K562 (cell line): ENCODE measurements at regions of chr1 and their contacts with region 1.

Region 1: DNA sequence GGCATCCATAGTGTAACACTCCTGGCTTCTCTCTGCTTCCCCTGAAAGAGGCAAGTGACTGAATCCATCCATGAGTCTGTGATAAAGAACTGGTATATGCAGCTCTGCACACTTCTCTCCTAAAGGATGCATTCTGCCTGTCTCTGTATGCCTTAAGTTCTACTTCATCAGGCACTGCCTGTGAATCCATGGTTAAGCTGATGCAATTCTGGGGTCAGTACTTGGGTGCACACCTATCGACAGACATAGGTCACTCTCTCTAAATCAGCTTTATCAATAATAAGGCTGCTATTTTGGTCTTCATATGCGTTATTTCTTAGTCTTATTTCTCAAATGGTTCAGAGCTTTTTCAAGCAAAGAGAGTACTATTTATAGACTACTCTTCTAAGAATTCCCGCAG is 32.7 kb upstream of the PTP4A2 start:
- DNase-seq: no peak
- ATAC-seq: peak; percentile 77
- H3K4me3 ChIP-seq: no peak overlapping the region
- H3K27ac ChIP-seq: no peak overlapping the region
- H3K4me1 ChIP-seq: peaks cover 0 to 3% of the 10 kb centered on the region in 2 experiments; a peak in 3 of 5 replicates
- H3K27me3 ChIP-seq: no peaks in the 10 kb centered on the region
- CTCF ChIP-seq: no peak
- EP300 ChIP-seq: no peak
- POLR2A ChIP-seq: no peak
- RAD21 ChIP-seq: no peak

Region 2: DNA sequence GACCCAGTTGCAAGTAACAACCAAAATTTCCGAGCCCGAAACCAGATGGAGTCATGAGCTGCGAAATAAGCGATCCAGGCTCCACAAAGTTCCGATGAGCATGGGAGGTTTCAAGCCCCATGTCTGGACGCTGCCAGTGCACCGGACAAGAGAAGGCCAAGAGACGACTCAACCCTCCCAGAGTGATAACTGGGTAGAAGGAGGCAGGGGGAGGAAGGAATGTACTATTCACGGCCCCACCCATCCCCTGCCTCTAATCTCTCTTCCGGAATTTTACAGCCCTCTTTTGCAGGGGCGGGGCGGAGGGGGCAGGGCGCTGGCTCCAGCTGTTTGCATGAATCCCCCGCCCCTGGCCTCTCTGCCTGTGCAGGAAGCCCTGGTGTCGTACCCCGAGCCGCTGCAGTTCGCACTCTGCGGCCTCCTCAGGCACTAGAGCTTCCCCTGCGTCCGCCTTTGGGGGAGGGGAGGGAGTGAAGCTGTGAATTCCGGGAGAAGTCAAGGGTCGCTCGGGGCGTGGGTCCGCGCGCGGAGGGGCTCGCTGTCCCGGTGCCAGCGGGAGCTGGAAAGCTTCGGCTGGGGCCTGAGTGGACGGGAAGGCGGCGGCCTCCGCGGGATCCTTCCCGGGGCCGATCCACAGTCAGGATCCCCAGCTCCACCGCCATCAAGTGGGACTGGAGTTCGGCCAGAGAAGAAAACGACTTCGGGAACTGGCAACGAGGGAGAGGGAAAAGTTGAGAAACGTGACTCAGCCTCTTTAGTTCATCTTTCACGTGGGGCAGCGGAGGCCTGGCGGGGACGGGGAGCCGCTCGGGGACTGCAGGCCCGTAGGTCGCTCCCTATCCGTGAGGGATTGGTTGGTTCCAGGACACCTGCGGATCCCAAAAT is 26.4 kb before region 1 on chr1:
- CTCF ChIA-PET with region 1: no interaction called
- POLR2A ChIA-PET with region 1: interaction called, 10 read pairs
- in situ Hi-C with region 1: no loop called
- intact Hi-C with region 1: no loop called
- DNase-seq: peak; percentile 94 to 100 (median 96)
- ATAC-seq: peak; percentile 91
- H3K4me3 ChIP-seq: peak overlapping the region; percentile 53
- H3K27ac ChIP-seq: peak overlapping the region; percentile 99
- H3K4me1 ChIP-seq: peaks cover 41 to 43% of the 10 kb centered on the region in 2 experiments
- H3K27me3 ChIP-seq: no peaks in the 10 kb centered on the region
- CTCF ChIP-seq: no peak
- EP300 ChIP-seq: peak; percentile 85
- POLR2A ChIP-seq: peak; percentile 96
- RAD21 ChIP-seq: peak; percentile 28 to 46; a peak in 3 of 4 replicates

Region 3: GRCh38 chr1:32485554-32486255 is 514.8 kb after region 1 on chr1:
- CTCF ChIA-PET with region 1: no interaction called
- POLR2A ChIA-PET with region 1: no interaction called
- in situ Hi-C with region 1: no loop called
- intact Hi-C with region 1: no loop called
- DNase-seq: no peak
- ATAC-seq: no peak
- H3K4me3 ChIP-seq: no peak overlapping the region
- H3K27ac ChIP-seq: no peak overlapping the region
- H3K4me1 ChIP-seq: no peaks in the 10 kb centered on the region
- H3K27me3 ChIP-seq: peaks cover 36 to 37% of the 10 kb centered on the region in 2 experiments; a peak in 4 of 5 replicates
- CTCF ChIP-seq: no peak
- EP300 ChIP-seq: no peak
- POLR2A ChIP-seq: no peak
- RAD21 ChIP-seq: no peak